H1 (cell line): ENCODE measurements at regions of chr14 and their contacts with region 1.

Region 1: DNA sequence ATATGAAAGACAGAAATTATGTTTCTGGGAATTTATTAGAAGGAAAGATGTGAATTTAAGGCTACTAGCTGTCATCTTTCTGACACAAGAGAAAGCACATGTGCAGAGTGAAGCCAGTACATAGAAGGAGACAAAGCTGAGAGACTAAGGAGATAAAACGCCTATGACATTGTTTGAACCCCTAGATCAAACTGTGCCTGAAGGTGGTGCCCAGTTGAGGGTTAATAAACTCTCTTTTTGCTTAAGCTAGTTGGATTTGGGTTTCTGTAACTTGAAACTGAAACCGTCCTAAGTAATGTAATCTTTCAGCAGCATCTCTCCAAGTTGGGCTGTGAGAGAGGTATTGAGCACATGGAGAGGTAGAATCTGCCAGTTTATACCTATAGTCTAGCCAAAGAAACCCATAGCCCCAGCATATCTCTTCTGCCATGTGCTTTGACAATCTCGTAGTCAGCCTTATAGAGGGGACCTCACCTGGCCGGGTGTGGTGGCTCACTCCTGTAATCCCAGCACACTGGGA is 84.2 kb downstream of the LRRC74A start:
- DNase-seq: no peak
- H3K4me3 ChIP-seq: no peak overlapping the region
- H3K27ac ChIP-seq: no peak overlapping the region
- H3K4me1 ChIP-seq: peaks cover 0 to 3% (median 1%) of the 10 kb centered on the region in 4 experiments; a peak in 2 of 7 replicates
- H3K27me3 ChIP-seq: no peaks in the 10 kb centered on the region
- CTCF ChIP-seq: no peak
- EP300 ChIP-seq: no peak
- POLR2A ChIP-seq: no peak
- RAD21 ChIP-seq: no peak

Region 2: GRCh38 chr14:76894308-76894892 is 16.0 kb before region 1 on chr14:
- CTCF ChIA-PET with region 1: interaction called, 144 read pairs
- POLR2A ChIA-PET with region 1: no interaction called
- DNase-seq: no peak
- H3K4me3 ChIP-seq: no peak overlapping the region
- H3K27ac ChIP-seq: no peak overlapping the region
- H3K4me1 ChIP-seq: no peaks in the 10 kb centered on the region
- H3K27me3 ChIP-seq: peaks cover 0 to 2% (median 0%) of the 10 kb centered on the region in 4 experiments; a peak in 1 of 7 replicates
- CTCF ChIP-seq: no peak
- EP300 ChIP-seq: no peak
- POLR2A ChIP-seq: no peak
- RAD21 ChIP-seq: no peak

Region 3: DNA sequence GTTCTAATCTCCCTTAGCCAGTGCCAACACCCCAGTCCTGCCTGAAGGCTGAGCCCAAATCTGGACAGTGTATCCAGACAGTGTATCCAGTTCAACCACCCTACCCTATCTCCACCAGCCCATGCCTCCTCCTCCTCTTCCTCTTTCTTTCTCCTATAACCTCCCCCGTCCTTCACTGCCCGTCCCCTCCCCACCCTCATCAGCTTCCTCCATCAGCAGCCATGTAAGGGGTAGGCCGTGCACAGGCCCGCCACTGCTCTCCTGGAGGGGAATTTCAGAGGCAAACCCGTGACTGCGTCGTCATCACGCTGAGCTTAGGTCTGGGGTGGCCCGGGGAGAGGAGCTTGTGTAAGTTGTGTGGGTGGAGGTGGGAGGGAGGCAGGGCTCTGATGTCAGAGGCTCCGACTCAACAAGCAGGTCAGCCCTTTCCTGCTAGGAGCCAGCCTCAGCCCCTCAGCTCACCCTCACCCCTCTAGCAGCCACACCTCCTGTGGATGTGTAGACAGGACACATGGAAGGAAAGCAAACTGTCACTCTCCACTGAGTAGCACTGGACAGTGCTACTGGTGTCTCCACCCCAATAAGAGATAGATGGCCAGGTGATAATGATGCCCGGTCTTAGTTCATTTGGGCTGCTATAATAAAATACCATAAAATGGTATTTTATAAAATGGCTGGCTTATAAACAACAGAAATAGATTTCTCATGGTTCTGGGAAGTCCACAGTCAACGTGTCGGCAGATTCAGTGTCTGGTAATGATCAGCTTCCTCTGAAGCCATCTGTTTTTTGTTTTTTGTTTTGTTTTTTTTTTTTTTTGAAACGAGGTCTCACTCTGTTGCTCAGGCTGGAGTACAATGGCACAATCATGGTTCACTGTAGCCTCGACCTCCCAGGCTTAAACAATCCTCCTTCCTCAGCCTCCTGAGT is 67.6 kb after region 1 on chr14:
- CTCF ChIA-PET with region 1: interaction called, 15 read pairs
- POLR2A ChIA-PET with region 1: no interaction called
- DNase-seq: peak in 1 of 2 experiments; percentile 48
- H3K4me3 ChIP-seq: no peak overlapping the region
- H3K27ac ChIP-seq: no peak overlapping the region
- H3K4me1 ChIP-seq: peaks cover 0 to 10% (median 2%) of the 10 kb centered on the region in 4 experiments; a peak in 4 of 7 replicates
- H3K27me3 ChIP-seq: no peaks in the 10 kb centered on the region
- CTCF ChIP-seq: no peak
- EP300 ChIP-seq: no peak
- POLR2A ChIP-seq: no peak
- RAD21 ChIP-seq: no peak